ENCODE measurements at regions of chr1 and their contacts with region 1.

Region 1: GRCh38 chr1:11838349-11839272 is 9.0 kb downstream of the NPPA start:
- DNase-seq: peak; percentile 90
- CTCF ChIP-seq: peak; percentile 99

Region 2: DNA sequence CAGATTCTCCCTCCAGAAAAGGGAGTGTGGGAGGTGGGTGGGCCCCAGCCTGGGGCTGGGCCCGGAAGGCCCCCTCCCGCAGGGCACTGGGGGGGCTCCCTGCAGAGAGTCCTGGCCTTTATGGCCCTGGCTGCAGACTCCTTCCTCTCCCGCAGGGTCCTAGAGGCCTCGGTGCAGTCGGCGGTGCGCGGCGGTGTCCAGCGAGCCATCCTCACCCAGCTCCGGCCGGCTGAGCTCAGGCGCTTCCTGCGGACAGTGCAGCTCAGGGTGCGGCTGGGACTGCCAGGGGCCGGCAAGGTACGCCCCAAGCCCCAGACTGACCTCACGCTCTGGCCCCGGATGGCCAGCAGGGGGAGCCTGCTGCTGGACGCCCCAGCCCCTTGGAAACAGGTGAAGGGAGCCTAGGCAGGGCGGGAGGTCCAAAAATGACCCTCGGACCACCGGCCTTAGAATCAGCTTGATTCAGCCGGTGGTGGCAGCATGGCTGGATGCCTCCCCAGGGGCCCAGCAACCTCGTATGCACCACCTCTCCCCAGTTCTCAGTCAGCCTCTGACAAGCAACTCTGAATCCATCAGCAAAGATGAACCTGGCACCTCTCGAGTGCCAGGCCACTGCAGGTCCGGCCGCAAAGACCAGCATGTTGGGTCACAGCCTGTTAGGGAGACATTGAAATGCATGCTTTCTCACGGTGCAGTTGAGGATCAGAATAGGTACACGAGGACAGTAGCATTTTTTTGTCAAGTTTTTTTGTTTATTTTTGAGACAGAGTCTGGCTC is 53.4 kb before region 1 on chr1:
- CTCF ChIA-PET with region 1: no interaction called
- POLR2A ChIA-PET with region 1: no interaction called
- DNase-seq: peak; percentile 85
- CTCF ChIP-seq: peak; percentile 91

Region 3: DNA sequence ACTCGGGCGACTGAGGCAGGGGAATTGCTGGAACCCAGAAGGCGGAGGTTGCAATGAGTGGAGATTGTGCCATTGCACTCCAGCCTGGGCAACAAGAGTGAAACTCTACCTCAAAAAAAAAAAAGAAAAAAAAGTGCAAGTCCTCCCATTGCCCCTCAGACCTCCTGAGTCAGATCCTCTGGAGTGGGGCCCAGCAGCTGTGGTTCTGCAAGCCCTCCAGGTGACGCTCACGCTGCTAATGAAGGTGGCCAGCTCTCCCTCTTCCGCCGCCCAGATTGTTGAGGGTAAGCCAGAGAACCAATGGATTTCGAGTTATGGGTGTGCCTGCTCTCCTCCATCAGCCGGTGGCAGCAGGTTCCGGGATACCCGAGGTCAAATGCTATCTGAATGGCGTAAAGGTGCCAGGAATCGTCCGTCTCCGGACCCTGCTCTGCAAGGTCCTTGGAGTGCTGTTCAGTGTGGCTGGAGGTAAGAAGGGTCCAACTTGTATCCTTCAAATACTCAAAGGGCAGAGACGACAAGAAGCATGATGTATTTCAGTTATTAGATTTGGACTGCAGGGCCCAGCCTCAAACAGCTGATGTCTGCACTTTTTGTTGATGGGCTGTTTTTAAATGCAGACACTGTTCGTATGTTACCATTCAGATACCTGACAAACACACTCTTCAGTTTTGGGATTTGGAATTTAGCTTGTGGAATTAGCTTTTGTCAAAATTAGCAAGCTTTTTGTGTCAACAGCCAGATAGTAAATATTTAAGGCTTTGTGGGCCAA is 15.1 kb before region 1 on chr1:
- CTCF ChIA-PET with region 1: interaction called, 12 read pairs
- POLR2A ChIA-PET with region 1: no interaction called
- DNase-seq: no peak
- CTCF ChIP-seq: no peak

Region 4: GRCh38 chr1:11893907-11894251 is 55.3 kb after region 1 on chr1:
- CTCF ChIA-PET with region 1: interaction called, 49 read pairs
- POLR2A ChIA-PET with region 1: no interaction called
- DNase-seq: peak; percentile 89
- CTCF ChIP-seq: peak; percentile 97

Region 5: GRCh38 chr1:11967028-11967547 is 128.5 kb after region 1 on chr1:
- CTCF ChIA-PET with region 1: interaction called, 14 read pairs
- POLR2A ChIA-PET with region 1: no interaction called
- DNase-seq: peak; percentile 75
- CTCF ChIP-seq: peak; percentile 75

Measured in GM10248 (cell line).